Activated naive CD4-positive, alpha-beta T cell treated with anti-CD3 and anti-CD28 coated beads for 36 hours (primary cell): ENCODE measurements at regions of chr21 and their contacts with region 1.

Region 1: GRCh38 chr21:32278518-32279376 is at the start of gene MIS18A:
- DNase-seq: peak; percentile 98
- H3K4me3 Mint-ChIP-seq: peak within 1 kb of the TSS; percentile 100
- H3K27ac Mint-ChIP-seq: peak within 1 kb of the TSS; percentile 90
- H3K4me1 Mint-ChIP-seq: peaks cover 17% of the 10 kb centered on the region
- H3K27me3 Mint-ChIP-seq: no peaks in the 10 kb centered on the region
- total RNA-seq, gene MIS18A: 37.4 to 37.8 TPM

Region 2: GRCh38 chr21:31659536-31660258 is 619.0 kb before region 1 on chr21 and contains the start of gene SOD1:
- CTCF ChIA-PET with region 1: no interaction called
- intact Hi-C with region 1: loop called (anchors 1 kb)
- DNase-seq: peak; percentile 95
- H3K4me3 Mint-ChIP-seq: peak within 1 kb of the TSS; percentile 100
- H3K27ac Mint-ChIP-seq: peak within 1 kb of the TSS; percentile 99
- H3K4me1 Mint-ChIP-seq: peaks cover 68% of the 10 kb centered on the region
- H3K27me3 Mint-ChIP-seq: no peaks in the 10 kb centered on the region
- total RNA-seq, gene SOD1: 281 to 297 TPM

Region 3: DNA sequence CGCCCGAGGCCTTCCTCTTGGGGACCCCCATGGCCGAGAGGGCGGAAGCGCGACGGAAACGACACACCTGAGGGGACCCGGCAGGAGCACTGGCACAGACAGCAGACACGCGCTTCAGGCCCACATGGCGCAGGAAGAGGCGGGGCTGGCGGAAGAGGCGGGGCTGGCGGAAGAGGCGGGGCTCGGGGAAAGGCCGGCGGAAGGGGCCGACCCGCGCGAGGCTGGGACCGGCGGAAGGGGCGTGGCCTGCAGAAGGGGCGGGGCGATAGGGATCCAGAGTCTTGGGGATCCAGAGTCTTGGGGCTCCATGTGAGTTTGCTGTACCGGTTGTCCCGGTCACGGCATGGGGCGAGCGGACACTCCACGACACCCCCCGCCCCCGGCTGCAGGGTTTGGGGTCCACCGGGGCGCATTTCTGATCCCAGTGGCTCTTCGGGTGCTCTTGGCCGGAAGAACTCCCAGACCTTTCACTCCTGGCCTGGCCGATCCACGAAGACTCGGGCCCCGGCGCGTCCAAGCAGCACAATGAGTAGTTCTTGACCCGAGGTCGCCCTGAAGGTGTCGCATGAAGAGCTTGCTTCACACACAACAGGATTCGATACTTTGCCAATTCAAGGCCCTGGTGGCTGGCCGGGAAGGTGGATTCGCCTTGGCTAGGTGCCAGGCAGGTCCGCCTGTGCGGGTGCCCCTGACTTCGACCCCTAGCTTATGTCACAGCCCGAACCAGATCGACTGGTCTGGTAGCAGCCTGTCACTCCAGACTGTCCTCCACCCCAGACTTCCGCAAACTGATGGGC is 114.3 kb after region 1 on chr21 and contains the start of gene URB1:
- CTCF ChIA-PET with region 1: no interaction called
- intact Hi-C with region 1: loop called (anchors 1 kb)
- DNase-seq: peak; percentile 94
- H3K4me3 Mint-ChIP-seq: peak within 1 kb of the TSS; percentile 83
- H3K27ac Mint-ChIP-seq: peak within 1 kb of the TSS; percentile 77
- H3K4me1 Mint-ChIP-seq: peaks cover 46% of the 10 kb centered on the region
- H3K27me3 Mint-ChIP-seq: no peaks in the 10 kb centered on the region
- total RNA-seq, gene URB1: 20.8 to 21.4 TPM

Region 4: GRCh38 chr21:32427958-32428623 is 149.3 kb after region 1 on chr21:
- CTCF ChIA-PET with region 1: no interaction called
- intact Hi-C with region 1: no loop called
- DNase-seq: no peak
- H3K4me3 Mint-ChIP-seq: no peak overlapping the region
- H3K27ac Mint-ChIP-seq: no peak overlapping the region
- H3K4me1 Mint-ChIP-seq: no peaks in the 10 kb centered on the region
- H3K27me3 Mint-ChIP-seq: no peaks in the 10 kb centered on the region

Region 5: DNA sequence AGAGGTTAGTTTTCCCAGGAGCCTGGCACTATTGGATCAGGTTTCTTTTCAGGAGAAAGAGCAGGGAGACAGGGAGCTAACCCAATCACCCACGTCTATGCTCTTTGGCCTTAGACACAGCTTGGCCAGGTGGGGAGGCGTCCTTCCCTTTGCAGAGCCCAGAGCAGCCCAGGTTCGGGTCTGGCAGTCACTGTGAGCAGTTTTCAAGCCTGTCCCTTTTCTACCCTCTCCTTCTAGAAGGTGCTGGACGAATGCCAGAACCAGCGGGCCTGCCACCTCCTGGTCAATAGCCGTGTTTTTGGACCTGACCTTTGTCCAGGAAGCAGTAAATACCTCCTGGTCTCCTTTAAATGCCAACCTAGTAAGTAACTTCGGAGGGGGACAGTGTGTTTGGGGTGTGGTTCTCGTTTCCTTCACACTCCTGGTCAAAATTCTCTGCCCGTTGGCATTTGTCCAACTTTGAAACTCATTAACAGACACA is 178.7 kb after region 1 on chr21:
- CTCF ChIA-PET with region 1: no interaction called
- intact Hi-C with region 1: no loop called
- DNase-seq: no peak
- H3K4me3 Mint-ChIP-seq: no peak overlapping the region
- H3K27ac Mint-ChIP-seq: no peak overlapping the region
- H3K4me1 Mint-ChIP-seq: no peaks in the 10 kb centered on the region
- H3K27me3 Mint-ChIP-seq: no peaks in the 10 kb centered on the region

Region 6: GRCh38 chr21:32569261-32570230 is 290.8 kb after region 1 on chr21:
- CTCF ChIA-PET with region 1: no interaction called
- intact Hi-C with region 1: loop called (anchors 1 kb)
- DNase-seq: peak; percentile 88
- H3K4me3 Mint-ChIP-seq: peak overlapping the region; percentile 70
- H3K27ac Mint-ChIP-seq: no peak overlapping the region
- H3K4me1 Mint-ChIP-seq: peaks cover 12% of the 10 kb centered on the region
- H3K27me3 Mint-ChIP-seq: no peaks in the 10 kb centered on the region

Region 7: DNA sequence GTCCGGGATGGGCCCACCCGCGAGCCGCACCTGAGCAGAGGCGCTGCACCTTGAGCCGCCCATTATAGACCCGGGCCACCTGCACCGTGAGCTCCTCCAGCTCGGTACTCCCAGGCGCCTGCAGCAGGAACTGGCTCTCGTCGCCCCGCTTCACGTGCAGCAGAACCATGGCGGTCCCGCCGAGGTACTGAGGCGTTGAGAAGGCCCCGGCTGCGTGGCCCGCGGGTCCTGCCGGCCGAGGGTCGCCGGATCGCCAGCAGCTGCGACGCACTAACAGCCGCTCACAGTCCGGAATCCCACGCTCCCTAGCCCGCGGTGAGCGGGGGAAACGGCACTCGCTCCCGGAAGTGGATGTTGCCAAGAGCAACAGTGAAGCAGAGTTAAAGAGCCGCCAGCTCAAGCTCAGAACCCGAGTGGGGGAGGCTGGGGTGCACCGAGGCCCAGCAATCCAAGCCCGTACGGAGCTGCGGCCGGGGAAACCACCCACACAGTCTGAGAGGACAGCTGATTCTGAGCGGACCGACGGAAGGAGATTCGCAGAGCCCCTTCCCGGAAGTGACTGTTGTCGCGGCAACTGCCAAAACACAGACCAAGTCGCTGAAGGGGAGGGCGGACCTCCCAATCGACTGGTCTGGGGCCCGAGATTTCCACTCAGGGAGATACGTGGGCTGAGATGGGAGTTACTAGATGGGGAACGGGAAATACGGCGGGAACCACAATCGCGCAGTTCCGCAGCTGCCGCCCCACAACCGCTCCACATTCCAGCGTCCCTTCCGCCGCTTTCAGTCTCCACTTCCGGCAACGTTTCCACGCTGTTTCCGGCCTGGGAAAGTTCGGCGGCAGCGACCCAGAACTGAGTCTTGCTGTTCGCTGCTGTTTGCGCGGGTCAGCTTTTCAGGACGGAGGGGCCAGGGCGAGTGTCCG is 333.6 kb after region 1 on chr21 and contains the start of gene CFAP298:
- CTCF ChIA-PET with region 1: no interaction called
- intact Hi-C with region 1: loop called (anchors 1 kb)
- DNase-seq: peak; percentile 88
- H3K4me3 Mint-ChIP-seq: peak within 1 kb of the TSS; percentile 98
- H3K27ac Mint-ChIP-seq: peak within 1 kb of the TSS; percentile 83
- H3K4me1 Mint-ChIP-seq: peaks cover 13% of the 10 kb centered on the region
- H3K27me3 Mint-ChIP-seq: no peaks in the 10 kb centered on the region
- total RNA-seq, gene CFAP298: 33.3 to 35.6 TPM